Activated B cell treated with CpG ODN at 0.5 μM for 24 hours (primary cell): ENCODE measurements at regions of chr4 and their contacts with region 1.

Region 1: DNA sequence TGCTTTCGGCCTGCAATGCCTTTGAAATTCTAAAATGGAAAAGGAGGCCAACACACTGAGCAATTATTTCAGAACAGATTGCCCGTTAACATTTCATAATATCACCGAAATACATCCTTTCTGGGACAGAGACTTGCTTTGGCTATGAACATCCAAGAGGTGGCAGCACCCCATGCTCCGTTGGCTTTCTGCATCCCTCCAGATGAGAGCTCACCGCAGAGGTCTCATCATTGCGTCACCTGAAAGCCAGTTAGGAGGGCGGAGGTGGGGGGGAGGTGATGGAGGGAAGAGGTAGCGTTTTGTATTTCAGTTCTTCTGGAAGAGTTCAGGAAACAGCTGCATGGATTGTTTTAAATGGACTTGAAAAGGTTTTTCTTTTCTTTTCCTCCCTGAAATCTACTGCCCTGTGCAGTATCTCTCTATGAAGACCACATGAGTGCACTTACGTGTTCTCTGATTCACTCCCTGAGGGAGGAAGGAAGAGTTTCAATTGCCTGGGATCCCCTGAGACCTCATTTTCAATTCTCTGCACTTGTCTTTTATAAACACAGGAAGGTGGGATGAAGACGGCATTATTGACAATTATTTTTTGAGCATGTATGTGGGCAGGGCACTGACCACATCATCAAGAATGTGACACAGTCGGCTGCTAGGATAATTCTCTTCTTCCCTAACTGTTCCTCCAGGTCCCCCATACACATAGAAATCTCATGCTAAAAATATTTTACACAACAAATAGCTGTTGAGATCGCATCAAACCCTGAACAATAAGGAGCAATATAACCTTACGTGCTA is 166.9 kb upstream of the PGRMC2 start:
- DNase-seq: no peak
- ATAC-seq: peak; percentile 88
- H3K4me3 Mint-ChIP-seq: no peak overlapping the region
- H3K27ac Mint-ChIP-seq: no peak overlapping the region
- H3K4me1 Mint-ChIP-seq: peaks cover 8% of the 10 kb centered on the region
- H3K27me3 Mint-ChIP-seq: peaks cover 6% of the 10 kb centered on the region
- CTCF ChIP-seq: no peak

Region 2: GRCh38 chr4:128191115-128191781 is 263.2 kb before region 1 on chr4:
- CTCF ChIA-PET with region 1: no interaction called
- POLR2A ChIA-PET with region 1: no interaction called
- intact Hi-C with region 1: loop called (anchors 10 kb)
- DNase-seq: peak; percentile 31
- ATAC-seq: peak; percentile 92
- H3K4me3 Mint-ChIP-seq: no peak overlapping the region
- H3K27ac Mint-ChIP-seq: no peak overlapping the region
- H3K4me1 Mint-ChIP-seq: no peaks in the 10 kb centered on the region
- H3K27me3 Mint-ChIP-seq: no peaks in the 10 kb centered on the region
- CTCF ChIP-seq: peak; percentile 79

Region 3: DNA sequence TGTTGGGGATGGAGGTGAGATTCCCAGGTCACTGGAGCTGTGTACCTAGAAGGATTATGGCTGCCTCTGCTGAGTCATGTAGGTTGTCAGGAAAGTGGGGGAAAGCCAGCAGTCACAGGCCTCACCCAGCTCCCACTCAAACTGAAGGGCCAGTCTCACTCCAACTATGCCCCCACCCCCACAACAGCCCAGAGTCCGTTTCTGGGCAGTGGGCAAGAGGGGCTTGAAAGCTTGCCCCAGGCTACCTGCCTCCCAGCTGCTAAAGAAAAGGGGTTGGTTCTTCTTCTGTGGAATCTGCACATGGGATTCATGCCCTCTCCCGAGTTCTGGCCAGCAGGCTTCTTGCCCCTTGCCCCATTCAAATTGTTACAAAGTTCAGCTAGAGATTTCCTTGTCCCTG is 50.9 kb before region 1 on chr4:
- CTCF ChIA-PET with region 1: no interaction called
- POLR2A ChIA-PET with region 1: no interaction called
- intact Hi-C with region 1: no loop called
- DNase-seq: no peak
- ATAC-seq: no peak
- H3K4me3 Mint-ChIP-seq: no peak overlapping the region
- H3K27ac Mint-ChIP-seq: no peak overlapping the region
- H3K4me1 Mint-ChIP-seq: no peaks in the 10 kb centered on the region
- H3K27me3 Mint-ChIP-seq: no peaks in the 10 kb centered on the region
- CTCF ChIP-seq: no peak

Region 4: GRCh38 chr4:128675083-128675482 is 220.6 kb after region 1 on chr4:
- CTCF ChIA-PET with region 1: no interaction called
- POLR2A ChIA-PET with region 1: no interaction called
- intact Hi-C with region 1: loop called (anchors 10 kb)
- DNase-seq: no peak
- ATAC-seq: peak; percentile 73
- H3K4me3 Mint-ChIP-seq: peak overlapping the region; percentile 55
- H3K27ac Mint-ChIP-seq: peak overlapping the region; percentile 71
- H3K4me1 Mint-ChIP-seq: peaks cover 25% of the 10 kb centered on the region
- H3K27me3 Mint-ChIP-seq: no peaks in the 10 kb centered on the region
- CTCF ChIP-seq: no peak